H1 (cell line): ENCODE measurements at regions of chr16 and their contacts with region 1.

Region 1: DNA sequence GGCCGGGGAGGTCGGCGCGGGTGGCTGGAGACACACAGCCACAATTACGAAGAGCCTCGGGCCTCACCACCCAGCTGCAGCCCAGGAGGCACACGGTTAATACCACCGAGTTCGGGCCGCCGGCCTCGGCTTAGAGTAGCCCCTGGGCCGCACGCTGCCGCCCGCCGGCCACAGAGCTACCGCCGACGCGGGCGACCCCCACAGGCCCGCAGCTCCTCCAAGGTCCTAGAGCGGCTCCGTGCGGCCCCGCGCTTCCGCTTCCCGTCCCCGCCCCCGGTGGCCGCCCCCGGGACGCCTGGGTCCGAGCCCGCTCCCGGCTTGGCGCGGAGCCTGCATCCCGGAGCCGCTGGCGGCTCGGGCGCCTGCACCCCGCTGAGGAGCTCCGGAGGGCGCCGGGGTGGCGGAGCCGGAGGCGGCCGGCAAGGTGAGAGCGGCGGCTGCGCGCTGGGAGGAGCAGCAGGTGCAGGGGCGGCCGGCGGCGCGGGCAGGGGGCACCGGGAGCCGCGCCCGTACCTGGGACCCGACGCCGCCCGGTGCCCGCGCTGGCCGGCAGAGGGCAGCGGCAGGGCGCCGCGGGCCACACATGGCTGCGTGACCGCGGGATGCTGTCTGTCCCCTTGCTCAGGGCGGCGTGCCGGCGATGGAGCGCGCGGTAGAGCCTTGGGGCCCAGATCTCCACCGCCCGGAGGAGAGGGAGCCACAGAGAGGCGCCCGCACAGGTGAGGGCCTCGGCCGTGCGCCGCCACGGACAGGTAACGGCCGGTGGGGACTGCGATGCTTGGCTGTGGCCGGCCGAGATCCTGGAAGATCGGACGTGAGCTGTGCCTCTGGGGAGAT is at the start of gene ZNF48:
- DNase-seq: peak in 1 of 2 experiments; percentile 89
- H3K4me3 ChIP-seq: peak within 1 kb of the TSS; percentile 72 to 98 (median 92)
- H3K27ac ChIP-seq: peak within 1 kb of the TSS; percentile 88
- H3K4me1 ChIP-seq: peaks cover 0 to 15% (median 9%) of the 10 kb centered on the region in 4 experiments; a peak in 6 of 7 replicates
- H3K27me3 ChIP-seq: no peaks in the 10 kb centered on the region
- CTCF ChIP-seq: peak; percentile 43 to 69 (median 49)
- EP300 ChIP-seq: no peak
- POLR2A ChIP-seq: peak in 1 of 2 experiments; percentile 73; a peak in 2 of 3 replicates
- RAD21 ChIP-seq: peak; percentile 10 to 45; a peak in 2 of 4 replicates
- total RNA-seq, gene ZNF48: 40.6 and 41.2 TPM in 2 replicates

Region 2: DNA sequence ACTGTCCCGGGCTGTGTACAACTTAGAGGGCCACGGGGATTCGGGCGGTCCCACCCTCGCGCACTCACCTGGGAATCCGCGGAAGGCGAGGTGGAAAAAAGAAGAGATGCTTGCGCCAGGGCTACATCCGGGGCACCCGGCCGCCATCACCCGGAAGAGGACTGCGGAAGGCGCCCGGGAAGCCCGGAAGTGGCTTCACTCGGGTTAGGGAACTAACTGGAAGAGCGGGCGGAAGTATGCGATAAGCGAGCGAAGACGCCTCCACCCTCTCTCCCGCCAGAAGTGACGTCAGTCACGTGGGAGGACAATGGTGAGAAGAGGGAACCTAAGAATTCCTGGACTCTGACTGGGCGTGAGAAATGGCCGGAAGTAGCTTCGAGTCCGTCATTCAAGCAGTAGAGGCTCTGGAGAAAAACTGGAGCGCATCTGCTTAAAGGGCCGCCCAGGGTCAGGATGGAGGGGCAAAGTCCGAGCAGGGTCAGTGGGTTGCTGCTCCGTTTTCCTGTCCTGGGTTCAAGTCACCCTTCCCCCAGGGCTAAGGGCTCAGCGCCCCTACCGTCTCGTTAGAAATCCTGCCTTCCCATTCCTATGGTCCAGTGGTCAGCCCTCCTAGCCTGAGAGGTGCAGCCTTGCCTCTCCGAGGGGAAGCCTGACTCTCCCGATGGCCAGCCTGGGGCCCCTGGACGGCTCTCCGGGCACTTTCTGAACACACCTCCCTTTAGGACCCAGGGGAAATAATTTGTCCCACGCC is 40.1 kb before region 1 on chr16 and contains the start of gene CD2BP2:
- CTCF ChIA-PET with region 1: interaction called, 5 read pairs
- POLR2A ChIA-PET with region 1: interaction called, 47 read pairs
- DNase-seq: peak; percentile 92 to 96
- H3K4me3 ChIP-seq: peak within 1 kb of the TSS; percentile 51 to 93 (median 81)
- H3K27ac ChIP-seq: peak within 1 kb of the TSS; percentile 97
- H3K4me1 ChIP-seq: peaks cover 0 to 12% (median 6%) of the 10 kb centered on the region in 4 experiments; a peak in 5 of 7 replicates
- H3K27me3 ChIP-seq: no peaks in the 10 kb centered on the region
- CTCF ChIP-seq: peak in 2 of 3 experiments; percentile 5 to 10; a peak in 2 of 4 replicates
- EP300 ChIP-seq: peak in 1 of 2 experiments; percentile 17; a peak in 1 of 3 replicates
- POLR2A ChIP-seq: peak; percentile 67 to 90
- RAD21 ChIP-seq: 0 out of 4 replicates have a peak, but pooled peaks of 1 of the 2 experiments have one; percentile 1
- total RNA-seq, gene CD2BP2: 55.3 and 55.4 TPM in 2 replicates

Region 3: GRCh38 chr16:30370444-30371247 is 24.7 kb before region 1 on chr16 and contains the start of gene TBC1D10B:
- CTCF ChIA-PET with region 1: interaction called, 12 read pairs
- POLR2A ChIA-PET with region 1: interaction called, 151 read pairs
- DNase-seq: peak; percentile 97 to 100
- H3K4me3 ChIP-seq: peak within 1 kb of the TSS; percentile 43 to 81 (median 52)
- H3K27ac ChIP-seq: no peak within 1 kb of the TSS
- H3K4me1 ChIP-seq: peaks cover 0 to 17% (median 11%) of the 10 kb centered on the region in 4 experiments; a peak in 6 of 7 replicates
- H3K27me3 ChIP-seq: no peaks in the 10 kb centered on the region
- CTCF ChIP-seq: peak in 2 of 3 experiments; percentile 25 to 31; a peak in 2 of 4 replicates
- EP300 ChIP-seq: no peak
- POLR2A ChIP-seq: no peak
- RAD21 ChIP-seq: no peak
- total RNA-seq, gene TBC1D10B: 28.6 and 29.4 TPM in 2 replicates

Region 4: GRCh38 chr16:30378236-30379204 is 16.9 kb before region 1 on chr16:
- CTCF ChIA-PET with region 1: interaction called, 9 read pairs
- POLR2A ChIA-PET with region 1: interaction called, 151 read pairs
- DNase-seq: peak; percentile 92 to 99
- H3K4me3 ChIP-seq: peak overlapping the region; percentile 70 to 88 (median 82)
- H3K27ac ChIP-seq: peak overlapping the region; percentile 92
- H3K4me1 ChIP-seq: peaks cover 0 to 9% (median 5%) of the 10 kb centered on the region in 4 experiments; a peak in 5 of 7 replicates
- H3K27me3 ChIP-seq: no peaks in the 10 kb centered on the region
- CTCF ChIP-seq: no peak
- EP300 ChIP-seq: no peak
- POLR2A ChIP-seq: peak; percentile 29 to 64; a peak in 2 of 3 replicates
- RAD21 ChIP-seq: no peak

Region 5: GRCh38 chr16:30417529-30418349 is 22.4 kb after region 1 on chr16:
- CTCF ChIA-PET with region 1: interaction called, 10 read pairs
- POLR2A ChIA-PET with region 1: interaction called, 15 read pairs
- DNase-seq: peak; percentile 86 to 94
- H3K4me3 ChIP-seq: peak overlapping the region; percentile 36 to 60 (median 50)
- H3K27ac ChIP-seq: no peak overlapping the region
- H3K4me1 ChIP-seq: peaks cover 3 to 6% (median 5%) of the 10 kb centered on the region in 4 experiments; a peak in 6 of 7 replicates
- H3K27me3 ChIP-seq: no peaks in the 10 kb centered on the region
- CTCF ChIP-seq: peak; percentile 21 to 37 (median 29); a peak in 2 of 4 replicates
- EP300 ChIP-seq: no peak
- POLR2A ChIP-seq: peak in 1 of 2 experiments; percentile 52; a peak in 1 of 3 replicates
- RAD21 ChIP-seq: peak; percentile 16 to 29; a peak in 2 of 4 replicates

Region 6: DNA sequence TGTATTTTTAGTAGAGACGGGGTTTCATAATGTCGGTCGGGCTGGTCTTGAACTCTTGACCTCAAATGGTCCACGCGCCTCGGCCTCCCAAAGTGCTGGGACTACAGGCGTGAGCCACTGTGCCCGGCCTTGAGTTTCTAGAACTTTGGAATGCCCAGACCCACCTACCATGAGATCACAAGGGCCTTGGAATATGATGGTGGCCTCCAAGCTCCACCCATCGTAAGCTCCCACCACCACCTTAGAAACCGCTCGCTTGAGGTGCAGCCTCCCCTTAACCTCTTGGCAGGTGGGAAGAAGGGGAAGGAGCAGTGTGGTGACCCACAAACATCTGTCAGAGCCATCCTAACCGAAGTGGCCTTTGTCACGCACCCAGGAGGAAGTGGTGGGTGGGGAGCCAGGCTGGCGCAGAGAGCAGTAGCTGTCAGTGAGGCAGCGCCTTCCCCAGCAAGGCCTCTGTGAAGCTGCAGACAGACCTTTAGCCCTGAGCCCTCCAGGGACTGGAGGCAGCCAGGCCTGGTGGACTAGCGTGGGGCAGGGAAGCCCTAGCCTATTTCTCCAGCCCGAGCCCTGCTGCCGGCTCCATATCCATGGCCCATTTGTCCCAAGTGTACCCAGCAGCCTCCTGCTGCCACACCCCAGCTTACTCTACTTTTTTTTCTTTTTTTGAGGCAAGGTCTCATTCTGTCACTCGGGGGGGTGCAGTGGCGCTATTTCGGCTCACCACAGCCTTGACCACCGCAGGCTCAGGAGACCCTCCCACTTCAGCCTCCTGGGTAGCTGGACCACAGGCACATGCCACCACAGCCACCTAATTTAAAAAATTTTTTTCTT is 63.4 kb after region 1 on chr16:
- CTCF ChIA-PET with region 1: no interaction called
- POLR2A ChIA-PET with region 1: no interaction called
- DNase-seq: no peak
- H3K4me3 ChIP-seq: no peak overlapping the region
- H3K27ac ChIP-seq: no peak overlapping the region
- H3K4me1 ChIP-seq: no peaks in the 10 kb centered on the region
- H3K27me3 ChIP-seq: no peaks in the 10 kb centered on the region; a peak in 1 of 7 replicates
- CTCF ChIP-seq: no peak
- EP300 ChIP-seq: no peak
- POLR2A ChIP-seq: no peak
- RAD21 ChIP-seq: no peak

Region 7: GRCh38 chr16:30557957-30558788 is 162.8 kb after region 1 on chr16 and contains the start of gene ZNF764:
- CTCF ChIA-PET with region 1: no interaction called
- POLR2A ChIA-PET with region 1: no interaction called
- DNase-seq: peak; percentile 86 to 88
- H3K4me3 ChIP-seq: peak within 1 kb of the TSS; percentile 58 to 86 (median 76)
- H3K27ac ChIP-seq: peak within 1 kb of the TSS; percentile 60; the same call in 1 of the 2 replicates
- H3K4me1 ChIP-seq: peaks cover 0 to 5% (median 2%) of the 10 kb centered on the region in 4 experiments; a peak in 2 of 7 replicates
- H3K27me3 ChIP-seq: peaks cover 0 to 3% (median 1%) of the 10 kb centered on the region in 4 experiments; a peak in 1 of 7 replicates
- CTCF ChIP-seq: no peak
- EP300 ChIP-seq: no peak
- POLR2A ChIP-seq: peak in 1 of 2 experiments; percentile 23; a peak in 1 of 3 replicates
- RAD21 ChIP-seq: no peak
- total RNA-seq, gene ZNF764: 7.7 and 8.4 TPM in 2 replicates